ENCODE measurements at regions of chr9 and their contacts with region 1.

Region 1: DNA sequence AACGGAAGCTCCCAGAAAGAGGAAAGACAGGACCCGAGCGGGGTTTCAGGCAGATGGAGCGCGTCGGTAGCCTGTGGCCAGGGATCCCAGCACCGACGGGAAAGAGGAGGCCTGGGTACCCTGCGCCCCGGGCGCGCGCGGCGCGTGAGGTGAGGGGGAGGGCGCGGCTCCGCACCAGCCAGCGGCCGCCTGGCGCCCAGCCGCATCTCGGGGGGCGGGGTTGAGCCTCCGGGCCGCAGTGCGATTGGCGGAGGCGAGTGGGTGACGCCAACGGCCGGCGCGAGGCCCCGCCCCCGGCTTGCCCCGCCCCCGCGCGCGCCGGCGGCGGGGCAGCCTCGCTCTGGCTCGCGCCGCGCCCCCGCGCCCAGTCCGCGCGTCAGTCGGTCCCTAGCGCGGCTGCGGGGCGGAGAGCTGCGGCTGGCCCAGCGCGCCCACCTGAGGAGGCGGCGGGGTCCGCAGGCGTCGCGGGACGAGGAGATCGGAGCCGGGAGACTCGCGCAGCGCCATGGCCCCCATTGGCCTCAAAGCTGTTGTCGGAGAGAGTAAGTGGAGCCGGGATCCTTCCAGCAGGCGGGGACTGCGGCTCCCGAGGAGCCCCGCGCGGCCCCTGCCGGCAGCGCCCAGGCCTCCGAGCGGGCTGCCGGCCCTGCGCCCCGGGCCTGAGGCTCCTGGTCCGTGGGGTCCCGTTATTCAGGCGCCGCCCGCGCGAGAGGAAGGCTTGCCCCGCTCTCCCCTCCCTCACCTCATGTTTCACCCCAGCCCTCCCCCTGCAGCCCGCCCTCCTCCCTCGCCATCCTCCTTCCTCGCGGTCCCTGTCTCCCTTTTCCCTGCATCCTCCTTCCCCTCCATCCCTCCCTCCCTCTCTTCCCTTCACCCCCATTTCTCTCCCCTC is at the start of gene STXBP1:
- DNase-seq: peak; percentile 90 to 94 (median 92)
- ATAC-seq: peak; percentile 92
- H3K4me3 ChIP-seq: peak within 1 kb of the TSS; percentile 60 to 77
- H3K27ac ChIP-seq: peak within 1 kb of the TSS; percentile 53 to 86 (median 84)
- H3K4me1 ChIP-seq: peaks cover 31% of the 10 kb centered on the region
- H3K27me3 ChIP-seq: no peaks in the 10 kb centered on the region
- CTCF ChIP-seq: peak in 3 of 7 experiments; percentile 11 to 33 (median 16)
- POLR2A ChIP-seq: peak; percentile 64 to 69 (median 65)
- total RNA-seq, gene STXBP1: 34.5 to 39.9 TPM

Region 2: GRCh38 chr9:127779136-127779981 is 167.2 kb after region 1 on chr9:
- intact Hi-C with region 1: loop called (anchors 5 kb)
- DNase-seq: no peak
- ATAC-seq: no peak
- H3K4me3 ChIP-seq: no peak overlapping the region
- H3K27ac ChIP-seq: peak overlapping the region in 2 of 4 donors; percentile 45 to 50
- H3K4me1 ChIP-seq: peaks cover 2% of the 10 kb centered on the region
- H3K27me3 ChIP-seq: no peaks in the 10 kb centered on the region
- CTCF ChIP-seq: no peak
- POLR2A ChIP-seq: no peak

Region 3: DNA sequence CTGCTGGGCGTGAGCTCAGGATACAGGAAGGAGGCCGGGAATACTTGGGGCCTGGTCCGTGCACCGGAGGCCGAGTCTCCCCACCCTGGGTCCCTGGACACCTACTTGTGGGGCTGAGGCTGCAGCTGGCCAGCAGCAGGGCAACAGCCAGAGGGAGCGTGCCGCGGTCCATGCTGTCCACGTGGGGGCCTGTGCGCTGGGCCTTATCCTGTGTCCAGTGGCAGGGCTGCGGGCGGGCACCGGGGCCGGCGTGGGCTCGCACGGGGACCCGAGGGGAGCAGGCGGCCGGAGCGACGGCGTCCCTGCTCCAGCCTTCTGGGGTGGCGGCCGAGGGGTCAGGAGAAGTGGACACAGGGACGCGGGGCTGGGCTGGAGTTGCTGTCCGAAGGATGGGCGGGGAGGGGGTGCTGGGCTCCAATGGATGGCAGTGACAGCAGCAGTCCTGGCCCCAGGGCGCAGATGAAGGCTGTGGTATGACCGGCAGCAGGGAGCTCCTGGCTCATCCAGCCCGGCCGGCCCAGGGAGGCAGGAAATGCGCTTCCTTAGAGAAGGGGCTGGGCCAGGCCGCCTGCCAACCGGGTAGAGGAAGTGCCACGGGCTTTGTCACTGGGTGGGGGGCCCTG is 242.2 kb after region 1 on chr9 and contains the start of gene ENG:
- intact Hi-C with region 1: no loop called
- DNase-seq: peak; percentile 47 to 61 (median 56)
- ATAC-seq: peak; percentile 57
- H3K4me3 ChIP-seq: peak within 1 kb of the TSS in 1 of 2 donors; percentile 8
- H3K27ac ChIP-seq: peak within 1 kb of the TSS; percentile 30 to 79 (median 62)
- H3K4me1 ChIP-seq: peaks cover 17% of the 10 kb centered on the region
- H3K27me3 ChIP-seq: no peaks in the 10 kb centered on the region
- CTCF ChIP-seq: no peak
- POLR2A ChIP-seq: peak in 2 of 3 donors; percentile 54 to 55
- total RNA-seq, gene ENG: 20.2 to 26.7 TPM

Measured in body of pancreas (tissue), 4 donors.